ENCODE measurements at regions of chr12 and their contacts with region 1.

Region 1: DNA sequence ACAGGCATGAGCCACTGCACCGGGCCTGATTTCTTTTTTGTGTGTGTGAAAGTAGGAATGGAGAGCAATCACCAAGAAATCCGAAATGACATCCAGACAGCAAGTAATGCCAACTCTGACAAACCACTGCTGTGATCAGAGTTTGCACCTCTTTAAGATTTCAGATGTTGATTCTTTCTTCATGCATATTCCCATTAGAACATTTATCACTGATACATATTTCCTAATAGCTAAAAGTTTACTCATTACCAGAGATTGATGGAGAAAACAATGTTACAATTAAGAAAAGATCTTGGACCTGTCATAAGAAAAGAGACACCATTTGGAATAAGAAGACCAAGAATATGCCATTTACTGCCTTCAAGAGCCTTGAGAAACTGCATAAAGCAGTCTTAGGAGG is 217.0 kb upstream of the MGAT4C start:
- DNase-seq: no peak
- ATAC-seq: no peak
- H3K4me3 ChIP-seq: no peak overlapping the region
- H3K27ac ChIP-seq: no peak overlapping the region
- H3K4me1 ChIP-seq: no peaks in the 10 kb centered on the region
- H3K27me3 ChIP-seq: no peaks in the 10 kb centered on the region
- CTCF ChIP-seq: no peak
- POLR2A ChIP-seq: no peak
- RAD21 ChIP-seq: no peak

Region 2: GRCh38 chr12:85329913-85330312 is 1143.3 kb before region 1 on chr12:
- CTCF ChIA-PET with region 1: no interaction called
- POLR2A ChIA-PET with region 1: no interaction called
- dilution Hi-C with region 1: no loop called
- in situ Hi-C with region 1: no loop called
- intact Hi-C with region 1: loop called (anchors 10 kb)
- DNase-seq: no peak
- ATAC-seq: no peak
- H3K4me3 ChIP-seq: no peak overlapping the region
- H3K27ac ChIP-seq: no peak overlapping the region
- H3K4me1 ChIP-seq: no peaks in the 10 kb centered on the region
- H3K27me3 ChIP-seq: no peaks in the 10 kb centered on the region
- CTCF ChIP-seq: no peak
- POLR2A ChIP-seq: no peak
- RAD21 ChIP-seq: no peak

Region 3: GRCh38 chr12:86484473-86484872 is 11.2 kb after region 1 on chr12:
- CTCF ChIA-PET with region 1: no interaction called
- POLR2A ChIA-PET with region 1: interaction called, 4 read pairs
- dilution Hi-C with region 1: no loop called
- in situ Hi-C with region 1: no loop called
- intact Hi-C with region 1: loop called (anchors 1 kb)
- DNase-seq: no peak
- ATAC-seq: no peak
- H3K4me3 ChIP-seq: no peak overlapping the region
- H3K27ac ChIP-seq: no peak overlapping the region
- H3K4me1 ChIP-seq: no peaks in the 10 kb centered on the region
- H3K27me3 ChIP-seq: no peaks in the 10 kb centered on the region
- CTCF ChIP-seq: no peak
- POLR2A ChIP-seq: no peak
- RAD21 ChIP-seq: no peak